ENCODE measurements at regions of chr5 and their contacts with region 1.

Region 1: GRCh38 chr5:79560771-79561524 is 47.0 kb upstream of the HOMER1 start:
- DNase-seq: peak; percentile 62
- H3K4me3 Mint-ChIP-seq: peak overlapping the region; percentile 4
- H3K27ac Mint-ChIP-seq: peak overlapping the region; percentile 99
- H3K4me1 Mint-ChIP-seq: peaks cover 40% of the 10 kb centered on the region
- H3K27me3 Mint-ChIP-seq: no peaks in the 10 kb centered on the region

Region 2: GRCh38 chr5:79514391-79515105 is 46.4 kb before region 1 on chr5:
- CTCF ChIA-PET with region 1: interaction called, 3 read pairs
- intact Hi-C with region 1: loop called (anchors 1 kb)
- DNase-seq: peak; percentile 91
- H3K4me3 Mint-ChIP-seq: peak overlapping the region; percentile 96
- H3K27ac Mint-ChIP-seq: peak overlapping the region; percentile 93
- H3K4me1 Mint-ChIP-seq: peaks cover 33% of the 10 kb centered on the region
- H3K27me3 Mint-ChIP-seq: peaks cover 19% of the 10 kb centered on the region

Region 3: DNA sequence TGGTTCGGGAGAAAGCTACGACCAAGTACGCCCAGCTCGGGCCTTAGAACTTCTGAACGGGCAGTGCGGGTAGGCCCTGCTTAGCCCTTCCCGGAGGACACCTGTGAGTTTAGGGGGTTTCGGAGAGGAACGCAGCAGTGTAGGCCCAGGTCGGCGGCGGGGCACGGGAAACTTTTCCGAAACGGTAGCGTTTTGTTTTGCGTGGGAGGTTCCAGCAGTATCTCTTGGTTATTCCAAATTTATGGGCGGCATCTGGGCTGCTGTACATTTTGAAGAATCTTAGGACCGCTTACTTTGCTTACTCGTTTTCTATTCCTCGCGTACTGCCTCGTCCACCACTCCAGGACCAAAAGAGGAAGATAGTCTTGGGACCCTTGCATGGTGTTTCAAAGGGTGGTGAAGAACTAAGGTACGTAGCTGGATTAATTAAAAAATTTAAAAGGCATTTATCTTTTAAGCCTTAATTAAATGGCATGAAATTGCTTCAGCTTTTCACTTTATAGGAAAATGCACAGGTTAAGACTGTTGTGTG is 51.8 kb after region 1 on chr5:
- CTCF ChIA-PET with region 1: interaction called, 4 read pairs
- intact Hi-C with region 1: loop called (anchors 1 kb)
- DNase-seq: peak; percentile 51
- H3K4me3 Mint-ChIP-seq: peak overlapping the region; percentile 97
- H3K27ac Mint-ChIP-seq: peak overlapping the region; percentile 98
- H3K4me1 Mint-ChIP-seq: peaks cover 37% of the 10 kb centered on the region
- H3K27me3 Mint-ChIP-seq: no peaks in the 10 kb centered on the region

Region 4: DNA sequence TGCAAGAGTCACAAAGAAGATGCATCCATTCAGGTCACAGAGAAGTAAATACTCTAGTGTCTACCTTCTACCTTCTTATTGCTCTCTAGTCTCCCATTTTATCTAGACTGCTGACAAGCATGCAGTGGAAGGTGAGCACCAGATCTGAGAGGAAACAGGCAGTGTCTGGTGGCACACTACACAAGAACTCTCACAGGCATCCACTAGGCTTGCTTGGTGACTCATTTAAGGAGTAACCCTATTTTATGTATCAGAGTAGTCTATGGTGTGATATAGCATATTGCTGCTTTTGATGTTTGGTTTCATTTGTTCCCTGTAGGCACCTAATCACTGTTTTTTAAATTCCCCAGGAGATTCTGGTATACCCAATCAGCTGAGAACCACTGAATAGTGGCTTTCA is 472.6 kb after region 1 on chr5:
- CTCF ChIA-PET with region 1: no interaction called
- intact Hi-C with region 1: loop called (anchors 2 kb)
- DNase-seq: peak; percentile 64
- H3K4me3 Mint-ChIP-seq: no peak overlapping the region
- H3K27ac Mint-ChIP-seq: no peak overlapping the region
- H3K4me1 Mint-ChIP-seq: peaks cover 37% of the 10 kb centered on the region
- H3K27me3 Mint-ChIP-seq: peaks cover 40% of the 10 kb centered on the region

Region 5: GRCh38 chr5:80204808-80205614 is 644.1 kb after region 1 on chr5:
- CTCF ChIA-PET with region 1: no interaction called
- intact Hi-C with region 1: loop called (anchors 5 kb)
- DNase-seq: peak; percentile 46
- H3K4me3 Mint-ChIP-seq: no peak overlapping the region
- H3K27ac Mint-ChIP-seq: peak overlapping the region; percentile 88
- H3K4me1 Mint-ChIP-seq: peaks cover 82% of the 10 kb centered on the region
- H3K27me3 Mint-ChIP-seq: no peaks in the 10 kb centered on the region

Region 6: DNA sequence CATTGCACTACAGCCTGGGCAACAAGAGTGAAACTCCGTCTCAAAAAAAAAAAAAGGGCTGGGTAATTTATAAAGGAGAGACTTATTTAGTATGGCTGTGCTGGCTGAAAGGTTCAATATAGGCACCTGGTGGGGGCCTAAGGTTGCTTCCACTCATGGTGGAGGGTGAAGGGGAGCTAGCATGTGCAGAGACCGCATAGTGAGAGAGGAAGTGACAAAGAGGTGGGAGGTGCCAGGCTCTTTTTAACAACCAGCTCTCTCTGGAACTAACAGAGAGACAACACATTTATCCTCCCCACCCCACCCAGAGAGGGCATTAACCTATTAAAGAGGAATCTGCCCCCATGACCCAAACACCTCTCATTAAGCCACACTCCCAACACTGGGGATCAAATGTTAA is 723.8 kb after region 1 on chr5:
- CTCF ChIA-PET with region 1: no interaction called
- intact Hi-C with region 1: loop called (anchors 5 kb)
- DNase-seq: peak; percentile 57
- H3K4me3 Mint-ChIP-seq: no peak overlapping the region
- H3K27ac Mint-ChIP-seq: peak overlapping the region; percentile 74
- H3K4me1 Mint-ChIP-seq: peaks cover 21% of the 10 kb centered on the region
- H3K27me3 Mint-ChIP-seq: no peaks in the 10 kb centered on the region